ENCODE measurements at regions of chr19 and their contacts with region 1.

Region 1: GRCh38 chr19:42283143-42284065 is 14.4 kb downstream of the CIC start:
- DNase-seq: peak; percentile 98
- H3K4me3 Mint-ChIP-seq: no peak overlapping the region
- H3K27ac Mint-ChIP-seq: no peak overlapping the region
- H3K4me1 Mint-ChIP-seq: peaks cover 39% of the 10 kb centered on the region
- H3K27me3 Mint-ChIP-seq: no peaks in the 10 kb centered on the region

Region 2: GRCh38 chr19:42052241-42052863 is 231.1 kb before region 1 on chr19:
- intact Hi-C with region 1: no loop called
- DNase-seq: no peak
- H3K4me3 Mint-ChIP-seq: no peak overlapping the region
- H3K27ac Mint-ChIP-seq: no peak overlapping the region
- H3K4me1 Mint-ChIP-seq: peaks cover 13% of the 10 kb centered on the region
- H3K27me3 Mint-ChIP-seq: no peaks in the 10 kb centered on the region

Region 3: GRCh38 chr19:42199440-42200115 is 83.8 kb before region 1 on chr19:
- intact Hi-C with region 1: no loop called
- DNase-seq: peak; percentile 93
- H3K4me3 Mint-ChIP-seq: peak overlapping the region; percentile 80
- H3K27ac Mint-ChIP-seq: peak overlapping the region; percentile 87
- H3K4me1 Mint-ChIP-seq: peaks cover 76% of the 10 kb centered on the region
- H3K27me3 Mint-ChIP-seq: no peaks in the 10 kb centered on the region

Region 4: GRCh38 chr19:42244347-42245220 is 38.8 kb before region 1 on chr19:
- intact Hi-C with region 1: loop called (anchors 1 kb)
- DNase-seq: peak; percentile 97
- H3K4me3 Mint-ChIP-seq: peak overlapping the region; percentile 90
- H3K27ac Mint-ChIP-seq: peak overlapping the region; percentile 93
- H3K4me1 Mint-ChIP-seq: peaks cover 31% of the 10 kb centered on the region
- H3K27me3 Mint-ChIP-seq: no peaks in the 10 kb centered on the region

Region 5: DNA sequence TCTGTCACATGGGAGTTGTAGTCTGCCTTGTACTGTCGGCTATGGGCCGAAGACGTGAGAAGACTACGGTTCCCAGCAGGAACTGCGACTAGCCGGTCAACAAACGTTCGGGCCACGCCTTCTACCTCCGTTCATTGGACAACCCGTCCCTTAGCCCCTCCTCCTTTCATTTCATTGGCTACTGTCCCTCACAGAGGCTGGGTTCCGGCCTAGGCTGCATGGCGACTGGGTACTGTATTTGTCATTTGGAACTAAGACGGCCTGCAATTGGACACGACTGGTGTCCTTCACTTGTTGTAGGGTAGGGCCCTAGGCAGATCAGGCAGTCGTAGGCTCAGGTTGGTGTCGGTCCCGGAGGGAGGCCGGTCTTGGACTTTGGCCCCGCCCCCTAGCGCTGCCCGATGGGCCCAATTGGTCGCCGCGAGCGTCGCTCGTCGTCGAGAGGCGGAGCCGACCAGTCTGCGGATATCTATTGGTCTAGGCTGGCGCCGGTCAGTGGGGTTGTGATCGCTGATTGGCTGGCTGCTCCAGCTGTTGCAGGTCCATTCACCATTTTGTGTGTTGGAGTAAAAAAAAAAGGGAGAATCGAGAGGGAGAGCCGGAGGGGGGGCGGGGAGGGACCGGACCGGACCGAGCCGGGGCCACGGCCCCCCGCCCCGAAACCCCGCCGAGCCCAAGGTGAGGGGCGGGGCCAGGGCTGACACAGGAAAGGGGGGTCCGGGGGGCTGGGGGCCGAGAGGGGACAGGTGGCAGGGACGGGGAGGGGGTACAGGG is 14.5 kb before region 1 on chr19 and contains the start of gene CIC:
- intact Hi-C with region 1: loop called (anchors 1 kb)
- DNase-seq: peak; percentile 100
- H3K4me3 Mint-ChIP-seq: no peak within 1 kb of the TSS
- H3K27ac Mint-ChIP-seq: peak within 1 kb of the TSS; percentile 99
- H3K4me1 Mint-ChIP-seq: peaks cover 30% of the 10 kb centered on the region
- H3K27me3 Mint-ChIP-seq: no peaks in the 10 kb centered on the region
- total RNA-seq, gene CIC: 61.2 and 65.6 TPM in 2 replicates

Region 6: DNA sequence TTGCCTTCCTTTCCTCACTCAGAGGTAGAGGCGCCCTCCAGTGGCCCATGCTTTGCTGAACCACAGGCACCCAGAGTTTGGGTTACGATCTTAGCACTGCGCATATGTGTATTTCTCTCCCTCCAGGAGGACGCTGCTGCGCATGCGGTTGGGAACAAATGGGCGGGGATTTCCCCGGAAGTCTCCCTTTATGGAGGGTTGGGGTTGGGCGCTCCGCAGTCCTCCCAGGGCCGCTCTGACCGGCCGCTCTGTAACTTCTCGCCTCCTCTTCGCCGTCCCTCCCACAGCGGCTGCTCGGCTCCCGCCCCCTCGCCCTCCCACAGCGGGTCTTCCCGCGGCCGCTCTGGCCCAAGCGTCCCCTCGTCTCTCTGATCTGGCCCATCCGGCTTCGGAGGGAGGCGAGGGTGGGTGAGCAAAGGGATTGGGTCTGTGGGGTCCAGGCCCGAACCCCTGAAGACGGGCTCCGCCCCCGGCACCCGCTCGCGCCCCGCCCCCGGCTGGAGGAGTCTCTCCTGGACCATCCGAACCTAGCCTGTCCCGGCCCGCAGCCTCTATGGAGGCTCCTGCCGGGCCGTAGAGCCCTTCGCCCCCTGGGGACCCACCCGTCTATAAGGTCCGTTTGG is 42.0 kb after region 1 on chr19 and contains the start of gene MEGF8:
- intact Hi-C with region 1: loop called (anchors 2 kb)
- DNase-seq: peak; percentile 100
- H3K4me3 Mint-ChIP-seq: peak within 1 kb of the TSS; percentile 93
- H3K27ac Mint-ChIP-seq: peak within 1 kb of the TSS; percentile 87
- H3K4me1 Mint-ChIP-seq: peaks cover 16% of the 10 kb centered on the region
- H3K27me3 Mint-ChIP-seq: peaks cover 30% of the 10 kb centered on the region
- total RNA-seq, gene MEGF8: 8.4 and 9.1 TPM in 2 replicates